ENCODE measurements at regions of chr9 and their contacts with region 1.

Region 1: DNA sequence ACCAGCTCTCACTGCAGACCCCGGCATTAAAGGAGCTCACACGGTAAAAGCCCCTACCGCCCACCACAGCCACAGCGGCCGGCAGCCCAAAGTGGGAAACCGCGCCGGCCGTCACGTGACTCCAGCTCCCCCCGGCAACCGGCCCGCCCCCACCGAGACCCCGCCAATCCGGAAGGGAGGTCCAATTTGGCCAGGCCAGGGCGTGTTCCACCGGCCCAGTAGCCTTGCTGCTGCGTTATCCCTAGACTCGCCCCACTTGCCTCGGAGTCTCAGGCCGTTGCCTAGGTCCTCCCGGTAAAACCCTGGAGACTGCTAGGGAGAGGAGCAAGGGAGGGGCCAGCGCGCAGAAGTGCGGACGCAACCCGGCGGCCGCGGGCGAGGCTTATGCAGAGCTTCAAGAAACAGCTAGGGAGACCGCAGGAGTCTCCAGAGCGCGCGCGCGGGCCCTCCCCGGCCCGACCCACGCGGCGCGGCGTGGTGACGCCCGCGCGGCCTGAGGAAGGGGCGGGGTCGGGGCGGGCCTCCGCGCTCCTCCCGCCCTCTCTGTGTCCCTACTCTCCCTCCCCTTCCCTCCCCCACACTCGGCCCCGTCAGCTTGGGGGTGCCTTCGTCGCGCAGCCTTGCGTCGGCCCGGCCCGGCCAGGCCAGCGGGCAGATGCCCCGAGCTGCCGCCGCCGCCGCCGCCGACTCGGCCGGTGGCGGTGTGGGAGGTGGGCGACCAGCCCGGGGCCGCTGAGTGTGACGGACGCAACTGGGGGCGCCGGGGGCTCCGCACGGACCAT is at the start of gene RIC1:
- DNase-seq: peak; percentile 88
- ATAC-seq: peak; percentile 75
- H3K4me3 Mint-ChIP-seq: peak within 1 kb of the TSS; percentile 100
- H3K27ac Mint-ChIP-seq: peak within 1 kb of the TSS; percentile 100
- H3K4me1 Mint-ChIP-seq: peaks cover 78% of the 10 kb centered on the region
- H3K27me3 Mint-ChIP-seq: no peaks in the 10 kb centered on the region
- CTCF ChIP-seq: no peak
- total RNA-seq, gene RIC1: 68.1 and 85.0 TPM in 2 replicates

Region 2: DNA sequence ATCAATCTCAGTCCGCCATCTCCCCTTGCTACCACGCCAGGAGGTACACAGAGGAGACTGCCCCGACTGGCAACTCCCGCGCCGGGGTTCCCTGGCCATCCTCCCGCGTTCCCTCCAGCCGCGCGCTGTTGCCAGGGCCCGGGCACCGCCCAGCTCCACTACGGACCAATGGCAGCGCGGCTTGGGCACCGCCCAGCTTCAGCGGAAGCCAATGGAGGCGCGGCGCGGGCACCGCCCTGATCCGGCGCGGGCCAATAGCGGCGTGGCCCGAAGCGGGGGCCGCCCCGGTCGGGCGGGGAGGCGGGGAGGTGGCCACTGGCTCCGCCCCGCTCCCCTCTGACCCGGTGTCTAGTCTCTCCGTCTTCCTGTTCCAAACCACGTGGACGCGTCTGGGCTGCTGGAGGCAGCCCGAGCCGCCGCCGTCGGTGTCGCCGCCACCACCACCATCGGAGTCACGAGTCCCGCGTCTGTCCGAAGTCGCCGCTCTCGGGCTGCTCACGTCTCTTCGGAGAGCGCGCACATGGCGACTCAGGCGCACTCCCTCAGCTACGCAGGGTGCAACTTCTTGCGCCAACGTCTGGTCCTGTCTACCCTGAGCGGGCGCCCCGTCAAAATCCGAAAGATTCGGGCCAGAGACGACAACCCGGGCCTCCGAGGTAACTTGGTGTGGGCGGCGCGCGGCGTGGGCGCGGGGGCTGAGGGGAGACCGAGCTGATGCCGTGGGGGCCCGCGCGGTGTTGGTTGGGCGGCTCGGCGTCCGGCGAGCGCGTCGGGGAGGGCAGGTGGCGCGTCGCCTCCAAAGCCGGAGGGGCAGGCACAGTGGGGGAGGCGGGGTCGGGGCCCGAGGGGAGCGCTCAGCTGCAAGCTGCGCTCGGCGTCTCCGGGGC is 835.9 kb before region 1 on chr9 and contains the start of gene RCL1:
- CTCF ChIA-PET with region 1: no interaction called
- POLR2A ChIA-PET with region 1: interaction called, 4 read pairs
- intact Hi-C with region 1: loop called (anchors 1 kb)
- DNase-seq: peak; percentile 97
- ATAC-seq: peak; percentile 93
- H3K4me3 Mint-ChIP-seq: peak within 1 kb of the TSS; percentile 97
- H3K27ac Mint-ChIP-seq: peak within 1 kb of the TSS; percentile 96
- H3K4me1 Mint-ChIP-seq: peaks cover 40% of the 10 kb centered on the region
- H3K27me3 Mint-ChIP-seq: peaks cover 2% of the 10 kb centered on the region
- CTCF ChIP-seq: no peak
- total RNA-seq, gene RCL1: 23.9 and 26.0 TPM in 2 replicates

Region 3: DNA sequence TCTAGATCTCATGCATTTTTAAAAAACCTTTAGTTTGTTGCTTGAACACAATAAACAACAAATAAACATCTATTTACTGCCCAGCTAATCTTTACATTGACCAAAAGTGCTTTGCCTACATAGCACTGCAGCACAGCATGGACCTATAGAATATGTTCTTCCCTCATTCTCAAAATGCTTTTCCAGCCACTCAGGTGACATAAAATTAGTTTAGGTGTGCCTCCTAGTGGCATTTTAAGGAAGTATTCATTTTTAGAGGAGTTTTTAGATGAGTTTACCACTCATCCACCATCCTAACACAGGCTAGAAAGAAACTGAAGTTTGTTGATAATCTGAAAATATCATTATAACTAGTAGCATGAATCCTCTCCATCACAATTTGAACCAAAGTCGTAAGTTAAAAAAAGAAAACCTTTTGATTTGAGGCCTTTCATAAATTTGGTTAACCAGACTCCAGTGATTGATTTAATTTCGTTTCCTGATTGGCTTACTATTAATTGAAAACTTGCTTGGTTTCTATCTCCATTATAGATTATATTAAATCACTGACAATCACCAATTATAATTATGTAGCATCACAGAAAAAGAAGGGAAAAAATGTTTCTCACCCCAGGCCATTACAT is 203.6 kb before region 1 on chr9:
- CTCF ChIA-PET with region 1: no interaction called
- POLR2A ChIA-PET with region 1: no interaction called
- intact Hi-C with region 1: no loop called
- DNase-seq: no peak
- ATAC-seq: no peak
- H3K4me3 Mint-ChIP-seq: no peak overlapping the region
- H3K27ac Mint-ChIP-seq: no peak overlapping the region
- H3K4me1 Mint-ChIP-seq: peaks cover 14% of the 10 kb centered on the region
- H3K27me3 Mint-ChIP-seq: no peaks in the 10 kb centered on the region
- CTCF ChIP-seq: no peak

Region 4: GRCh38 chr9:5450359-5451091 is 178.2 kb before region 1 on chr9 and contains the start of gene CD274:
- CTCF ChIA-PET with region 1: interaction called, 7 read pairs
- POLR2A ChIA-PET with region 1: interaction called, 44 read pairs
- intact Hi-C with region 1: loop called (anchors 1 kb)
- DNase-seq: peak; percentile 76
- ATAC-seq: peak; percentile 83
- H3K4me3 Mint-ChIP-seq: peak within 1 kb of the TSS; percentile 95
- H3K27ac Mint-ChIP-seq: peak within 1 kb of the TSS; percentile 96
- H3K4me1 Mint-ChIP-seq: peaks cover 75% of the 10 kb centered on the region
- H3K27me3 Mint-ChIP-seq: no peaks in the 10 kb centered on the region
- CTCF ChIP-seq: no peak
- total RNA-seq, gene CD274: 47.4 and 48.9 TPM in 2 replicates

Region 5: GRCh38 chr9:5608298-5609225 is 20.2 kb before region 1 on chr9:
- CTCF ChIA-PET with region 1: interaction called, 10 read pairs
- POLR2A ChIA-PET with region 1: interaction called, 77 read pairs
- intact Hi-C with region 1: no loop called
- DNase-seq: no peak
- ATAC-seq: peak; percentile 78
- H3K4me3 Mint-ChIP-seq: peak overlapping the region; percentile 80
- H3K27ac Mint-ChIP-seq: peak overlapping the region; percentile 85
- H3K4me1 Mint-ChIP-seq: peaks cover 30% of the 10 kb centered on the region
- H3K27me3 Mint-ChIP-seq: no peaks in the 10 kb centered on the region
- CTCF ChIP-seq: no peak

Region 6: DNA sequence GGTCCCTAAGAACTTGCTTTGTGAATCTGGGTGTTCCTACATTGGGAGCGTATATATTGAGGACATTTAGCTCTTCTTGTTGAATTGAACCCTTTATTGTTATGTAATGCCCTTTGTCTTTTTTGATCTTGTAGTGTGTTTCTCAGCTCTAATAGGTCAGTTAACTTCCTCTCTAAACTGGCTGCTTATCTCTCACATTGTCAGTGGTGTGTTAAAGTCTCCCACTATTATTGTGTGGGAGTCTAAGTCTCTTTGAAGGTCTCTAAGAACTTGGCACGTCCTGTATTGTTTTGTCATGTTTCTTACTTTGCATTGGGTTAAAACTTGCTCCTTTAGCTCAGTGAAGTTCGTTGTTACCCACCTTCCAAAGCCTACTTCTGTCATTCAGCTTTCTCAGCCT is 36.3 kb after region 1 on chr9:
- CTCF ChIA-PET with region 1: no interaction called
- POLR2A ChIA-PET with region 1: interaction called, 3 read pairs
- intact Hi-C with region 1: loop called (anchors 5 kb)
- DNase-seq: no peak
- ATAC-seq: no peak
- H3K4me3 Mint-ChIP-seq: no peak overlapping the region
- H3K27ac Mint-ChIP-seq: no peak overlapping the region
- H3K4me1 Mint-ChIP-seq: peaks cover 66% of the 10 kb centered on the region
- H3K27me3 Mint-ChIP-seq: no peaks in the 10 kb centered on the region
- CTCF ChIP-seq: no peak

Region 7: GRCh38 chr9:6008169-6008979 is 379.7 kb after region 1 on chr9:
- CTCF ChIA-PET with region 1: no interaction called
- POLR2A ChIA-PET with region 1: interaction called, 11 read pairs
- intact Hi-C with region 1: loop called (anchors 1 kb)
- DNase-seq: peak; percentile 82
- ATAC-seq: peak; percentile 75
- H3K4me3 Mint-ChIP-seq: peak overlapping the region; percentile 85
- H3K27ac Mint-ChIP-seq: peak overlapping the region; percentile 87
- H3K4me1 Mint-ChIP-seq: peaks cover 57% of the 10 kb centered on the region
- H3K27me3 Mint-ChIP-seq: no peaks in the 10 kb centered on the region
- CTCF ChIP-seq: no peak

Region 8: DNA sequence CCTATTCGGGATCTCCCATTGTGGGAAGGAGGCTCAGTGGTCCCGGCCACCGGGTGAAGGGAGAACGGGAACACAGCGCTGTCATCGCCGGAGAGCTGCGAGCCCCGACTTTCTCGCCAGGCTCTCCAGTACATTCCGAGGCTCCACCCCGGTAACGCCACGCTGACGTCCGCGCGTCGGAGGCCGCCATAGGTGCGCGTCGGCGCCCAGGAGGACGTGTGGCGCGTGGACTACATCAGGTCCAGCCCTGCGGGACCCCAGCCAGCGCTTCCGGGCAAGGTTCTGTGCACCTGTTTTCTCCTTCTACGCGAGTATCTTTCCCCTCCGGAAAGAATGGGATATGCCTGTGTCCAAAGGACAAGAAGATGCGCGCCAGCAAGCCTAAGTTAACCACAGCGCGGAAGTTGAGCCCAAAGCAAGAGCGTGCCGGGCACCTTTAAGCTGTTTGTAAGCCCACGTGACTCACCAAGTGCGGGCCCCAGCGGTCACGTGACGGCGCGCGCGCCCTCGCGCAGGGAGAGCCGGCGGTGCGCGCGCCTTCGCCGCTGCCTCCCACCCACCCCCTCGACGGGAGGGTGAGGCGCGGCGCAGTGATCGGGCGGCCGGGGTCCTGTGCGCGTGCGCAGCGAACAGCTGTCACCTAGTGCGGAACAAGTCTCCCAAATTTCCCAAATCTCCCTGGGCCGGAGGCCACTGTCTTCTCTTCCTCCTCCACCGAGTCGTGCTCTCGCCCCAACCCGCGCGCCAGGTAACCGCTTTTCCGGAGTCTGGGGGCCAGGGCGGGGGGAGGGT is 1128.9 kb after region 1 on chr9 and contains the start of gene KDM4C:
- CTCF ChIA-PET with region 1: no interaction called
- POLR2A ChIA-PET with region 1: interaction called, 7 read pairs
- intact Hi-C with region 1: loop called (anchors 10 kb)
- DNase-seq: peak; percentile 92
- ATAC-seq: peak; percentile 75
- H3K4me3 Mint-ChIP-seq: peak within 1 kb of the TSS; percentile 99
- H3K27ac Mint-ChIP-seq: peak within 1 kb of the TSS; percentile 100
- H3K4me1 Mint-ChIP-seq: peaks cover 39% of the 10 kb centered on the region
- H3K27me3 Mint-ChIP-seq: no peaks in the 10 kb centered on the region
- CTCF ChIP-seq: no peak
- total RNA-seq, gene KDM4C: 90.7 and 113 TPM in 2 replicates